A549 (cell line): ENCODE measurements at regions of chr2 and their contacts with region 1.

Region 1: DNA sequence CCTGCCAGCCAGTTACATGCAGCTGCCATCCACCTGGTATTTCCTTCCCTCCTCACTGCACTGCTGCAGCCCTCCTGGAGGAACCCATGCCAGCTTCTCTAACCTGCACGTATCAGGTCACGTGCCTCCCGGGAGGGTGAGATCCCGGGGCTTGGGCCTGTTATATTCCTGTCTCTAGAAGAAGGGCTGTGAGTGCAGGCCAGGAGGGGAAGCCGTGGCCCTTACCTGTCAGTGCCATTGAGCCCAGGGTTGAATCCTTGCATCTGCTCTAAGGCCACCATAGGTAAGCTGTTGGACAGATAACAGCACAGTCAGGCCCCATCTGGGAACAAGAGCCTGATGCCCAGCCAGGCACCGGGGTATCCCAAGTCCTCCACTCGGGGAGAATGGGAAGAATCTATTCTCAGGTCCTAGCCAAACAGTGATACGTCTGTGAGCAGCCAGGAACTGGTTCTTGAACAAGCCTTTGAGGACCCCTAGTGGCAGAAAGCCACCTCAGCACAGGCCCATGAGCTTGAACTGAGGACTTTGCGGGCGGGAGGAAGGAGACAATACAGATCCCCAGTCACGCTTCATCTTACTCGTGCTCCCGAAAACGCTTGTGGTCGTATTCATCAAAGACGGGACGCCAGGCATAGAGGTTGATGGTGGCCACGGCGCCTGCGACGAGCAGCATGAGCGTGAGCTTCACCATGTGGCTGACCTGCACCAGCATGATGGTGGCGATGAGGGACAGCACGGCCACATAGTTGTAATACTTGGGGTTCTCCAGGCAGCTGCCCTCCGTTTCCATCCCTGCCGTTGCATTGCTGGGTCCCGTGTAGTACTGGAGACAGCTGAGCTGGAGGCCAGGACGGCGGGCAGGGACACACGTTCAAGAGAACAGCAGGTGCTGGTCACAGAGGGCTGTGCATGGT is 34.4 kb downstream of the CENPO start:
- DNase-seq: peak; percentile 90 to 95
- ATAC-seq: peak; percentile 84 to 91
- H3K4me3 ChIP-seq: no peak overlapping the region
- H3K27ac ChIP-seq: peak overlapping the region in 1 of 2 experiments; percentile 1; a peak in 1 of 6 replicates
- H3K4me1 ChIP-seq: 0 out of 3 replicates have a peak, but pooled peaks cover 2% of the 10 kb centered on the region
- CTCF ChIP-seq: peak; percentile 93
- EP300 ChIP-seq: no peak
- POLR2A ChIP-seq: no peak
- RAD21 ChIP-seq: peak; percentile 95 to 97

Region 2: GRCh38 chr2:24392542-24393059 is 435.0 kb before region 1 on chr2:
- CTCF ChIA-PET with region 1: interaction called, 15 read pairs
- POLR2A ChIA-PET with region 1: no interaction called
- DNase-seq: no peak
- ATAC-seq: peak in 1 of 2 experiments; percentile 55; a peak in 2 of 6 replicates
- H3K4me3 ChIP-seq: no peak overlapping the region
- H3K27ac ChIP-seq: no peak overlapping the region
- H3K4me1 ChIP-seq: no peaks in the 10 kb centered on the region
- CTCF ChIP-seq: no peak
- EP300 ChIP-seq: no peak
- POLR2A ChIP-seq: no peak
- RAD21 ChIP-seq: no peak

Region 3: GRCh38 chr2:24421668-24422067 is 405.9 kb before region 1 on chr2:
- CTCF ChIA-PET with region 1: interaction called, 41 read pairs
- POLR2A ChIA-PET with region 1: no interaction called
- DNase-seq: peak; percentile 43 to 66
- ATAC-seq: peak; percentile 57 to 90
- H3K4me3 ChIP-seq: no peak overlapping the region
- H3K27ac ChIP-seq: no peak overlapping the region
- H3K4me1 ChIP-seq: no peaks in the 10 kb centered on the region
- CTCF ChIP-seq: peak; percentile 46; the same call in 2 of the 3 replicates
- EP300 ChIP-seq: no peak
- POLR2A ChIP-seq: no peak
- RAD21 ChIP-seq: peak; percentile 61 to 76

Region 4: GRCh38 chr2:24435391-24436316 is 391.9 kb before region 1 on chr2:
- CTCF ChIA-PET with region 1: interaction called, 12 read pairs
- POLR2A ChIA-PET with region 1: no interaction called
- DNase-seq: no peak
- ATAC-seq: peak in 1 of 2 experiments; percentile 30; a peak in 1 of 6 replicates
- H3K4me3 ChIP-seq: no peak overlapping the region
- H3K27ac ChIP-seq: no peak overlapping the region
- H3K4me1 ChIP-seq: no peaks in the 10 kb centered on the region
- CTCF ChIP-seq: no peak
- EP300 ChIP-seq: no peak
- POLR2A ChIP-seq: no peak
- RAD21 ChIP-seq: no peak

Region 5: DNA sequence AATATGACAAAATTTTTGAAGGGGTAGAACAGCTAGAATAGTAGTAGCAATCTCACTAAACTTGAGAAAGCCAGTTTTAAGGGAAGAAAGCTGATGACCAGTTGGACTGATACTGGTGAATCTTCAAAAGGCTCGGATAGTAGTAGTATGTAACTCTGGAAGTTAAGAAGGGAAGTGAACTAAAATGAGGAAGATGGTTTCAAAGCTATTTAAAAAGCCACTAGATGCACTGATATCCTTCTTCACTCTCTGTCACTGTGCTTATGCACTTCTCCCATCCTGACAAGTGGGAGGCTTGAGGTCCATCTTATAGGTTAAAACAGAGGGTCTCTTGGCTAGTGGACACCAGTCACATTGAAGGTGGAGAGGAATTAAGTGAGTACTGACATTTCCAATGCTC is 195.4 kb before region 1 on chr2:
- CTCF ChIA-PET with region 1: no interaction called
- POLR2A ChIA-PET with region 1: no interaction called
- DNase-seq: no peak
- ATAC-seq: no peak
- H3K4me3 ChIP-seq: no peak overlapping the region
- H3K27ac ChIP-seq: no peak overlapping the region
- H3K4me1 ChIP-seq: no peaks in the 10 kb centered on the region
- CTCF ChIP-seq: no peak
- EP300 ChIP-seq: no peak
- POLR2A ChIP-seq: no peak
- RAD21 ChIP-seq: no peak

Region 6: GRCh38 chr2:24816884-24817283 is 10.7 kb before region 1 on chr2:
- CTCF ChIA-PET with region 1: interaction called, 33 read pairs
- POLR2A ChIA-PET with region 1: interaction called, 8 read pairs
- DNase-seq: no peak
- ATAC-seq: no peak
- H3K4me3 ChIP-seq: no peak overlapping the region
- H3K27ac ChIP-seq: peak overlapping the region in 1 of 2 experiments; percentile 6; a peak in 1 of 6 replicates
- H3K4me1 ChIP-seq: peaks cover 10% of the 10 kb centered on the region
- CTCF ChIP-seq: no peak
- EP300 ChIP-seq: no peak
- POLR2A ChIP-seq: no peak
- RAD21 ChIP-seq: no peak

Region 7: GRCh38 chr2:24840962-24841945 is 13.7 kb after region 1 on chr2:
- CTCF ChIA-PET with region 1: interaction called, 25 read pairs
- POLR2A ChIA-PET with region 1: no interaction called
- DNase-seq: no peak
- ATAC-seq: no peak
- H3K4me3 ChIP-seq: no peak overlapping the region
- H3K27ac ChIP-seq: no peak overlapping the region
- H3K4me1 ChIP-seq: no peaks in the 10 kb centered on the region
- CTCF ChIP-seq: no peak
- EP300 ChIP-seq: no peak
- POLR2A ChIP-seq: no peak
- RAD21 ChIP-seq: no peak

Region 8: GRCh38 chr2:25018681-25019080 is 191.1 kb after region 1 on chr2:
- CTCF ChIA-PET with region 1: no interaction called
- POLR2A ChIA-PET with region 1: no interaction called
- DNase-seq: no peak
- ATAC-seq: no peak
- H3K4me3 ChIP-seq: no peak overlapping the region
- H3K27ac ChIP-seq: no peak overlapping the region
- H3K4me1 ChIP-seq: no peaks in the 10 kb centered on the region
- CTCF ChIP-seq: no peak
- EP300 ChIP-seq: no peak
- POLR2A ChIP-seq: no peak
- RAD21 ChIP-seq: no peak